Heart right ventricle (tissue), 16 donors: ENCODE measurements at regions of chr21 and their contacts with region 1.

Region 1: DNA sequence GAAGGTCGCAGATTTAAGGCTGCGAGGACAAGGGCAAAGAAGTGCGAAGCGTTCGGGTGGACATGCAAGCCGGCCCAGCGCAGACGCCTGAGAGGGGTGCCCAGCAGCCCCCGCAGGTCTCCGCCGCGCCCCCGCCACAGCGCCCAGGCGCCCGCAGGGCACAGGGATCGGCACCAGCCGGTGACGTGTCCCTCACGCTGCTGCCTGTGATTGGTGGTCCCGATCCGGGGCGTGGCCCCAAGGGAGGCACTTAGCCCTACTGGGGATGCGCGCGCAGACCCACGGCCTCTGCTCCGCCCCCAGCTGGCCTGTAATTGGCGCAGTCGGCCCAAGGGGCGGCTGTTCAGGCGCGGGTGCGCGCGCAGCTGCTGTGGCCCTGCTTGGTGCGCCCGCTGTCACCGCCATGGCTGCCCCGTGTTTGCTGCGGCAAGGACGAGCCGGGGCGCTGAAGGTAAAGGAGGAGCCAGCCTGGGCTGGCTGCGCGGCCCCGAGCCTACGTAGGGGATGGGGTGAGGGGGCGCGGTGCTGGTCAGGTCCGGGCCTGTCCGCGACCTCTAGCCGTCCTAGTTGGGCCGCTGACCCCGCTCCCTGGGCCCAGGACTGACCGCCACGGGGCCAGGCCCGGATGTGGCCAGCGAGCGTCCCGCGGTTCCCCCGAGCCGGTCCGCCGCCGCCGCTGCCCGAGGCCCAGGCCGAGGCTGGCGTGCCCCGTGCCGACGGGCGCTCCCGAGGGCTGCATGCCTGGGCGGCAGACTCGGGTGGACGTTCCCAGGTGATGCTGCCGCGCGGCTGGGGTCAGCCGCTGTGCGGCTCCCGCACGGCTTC is at the start of gene NDUFV3:
- DNase-seq: peak; percentile 99 to 100
- ATAC-seq: peak; percentile 97 to 100 (median 99)
- H3K4me3 ChIP-seq: peak within 1 kb of the TSS; percentile 58 to 99 (median 86)
- H3K27ac ChIP-seq: peak within 1 kb of the TSS; percentile 86 to 99 (median 96)
- H3K4me1 ChIP-seq: peaks cover 5 to 28% (median 20%) of the 10 kb centered on the region in 9 donors
- H3K27me3 ChIP-seq: no peaks in the 10 kb centered on the region
- CTCF ChIP-seq: no peak
- total RNA-seq, gene NDUFV3: 42.6 to 63.7 (median 52.2) TPM

Region 2: DNA sequence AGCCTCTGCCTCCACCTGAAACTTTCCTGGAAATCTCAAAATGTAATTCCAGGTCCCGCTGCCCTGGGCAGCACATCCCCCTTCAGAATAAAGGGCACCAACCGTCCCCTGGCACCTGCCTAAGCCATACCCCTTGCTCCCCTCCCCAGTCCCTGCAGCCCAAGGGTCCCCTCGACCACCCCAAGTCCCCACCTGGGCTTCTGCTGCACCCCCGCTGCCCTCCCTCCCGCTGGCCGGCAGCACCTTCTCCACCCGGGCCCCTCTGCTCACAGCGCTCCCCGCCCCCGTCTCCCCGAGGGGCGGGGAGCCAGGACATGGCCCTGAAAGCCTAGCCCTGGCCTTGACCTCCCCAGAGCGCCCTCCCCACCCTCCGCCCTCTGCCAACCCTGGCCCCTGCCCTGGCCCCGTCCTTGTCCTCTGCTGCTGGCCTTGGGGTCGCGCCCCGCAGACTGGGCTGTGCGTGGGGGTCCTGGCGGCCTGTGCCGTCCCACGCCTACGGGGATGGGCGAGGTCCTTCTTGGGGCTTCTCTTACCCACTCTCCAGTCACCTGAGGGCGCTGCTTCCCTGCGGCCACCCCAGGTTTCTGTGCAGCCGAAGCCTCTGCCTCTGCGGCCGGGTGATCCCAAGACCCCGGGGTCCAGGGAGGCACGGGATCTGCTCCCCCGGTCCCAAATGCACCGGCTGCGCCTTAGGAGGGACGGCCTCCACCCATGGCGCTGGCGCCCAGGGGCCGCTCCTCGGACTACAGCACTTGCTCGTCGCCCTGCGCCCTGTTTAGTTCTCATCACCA is 55.5 kb before region 1 on chr21:
- intact Hi-C with region 1: no loop called
- DNase-seq: no peak
- ATAC-seq: peak in 3 of 8 donors; percentile 5 to 13 (median 10)
- H3K4me3 ChIP-seq: no peak overlapping the region
- H3K27ac ChIP-seq: no peak overlapping the region
- H3K4me1 ChIP-seq: peaks cover 0 to 10% (median 0%) of the 10 kb centered on the region in 9 donors
- H3K27me3 ChIP-seq: peaks cover 0 to 8% (median 6%) of the 10 kb centered on the region in 7 donors
- CTCF ChIP-seq: no peak

Region 3: GRCh38 chr21:42878993-42879787 is 14.0 kb before region 1 on chr21 and contains the start of gene WDR4:
- intact Hi-C with region 1: loop called in 2 of 10 experiments (anchors 1 kb)
- DNase-seq: peak; percentile 97 to 98
- ATAC-seq: peak; percentile 99 to 100 (median 99)
- H3K4me3 ChIP-seq: peak within 1 kb of the TSS; percentile 80 to 100 (median 90)
- H3K27ac ChIP-seq: peak within 1 kb of the TSS; percentile 53 to 96 (median 89)
- H3K4me1 ChIP-seq: peaks cover 5 to 25% (median 19%) of the 10 kb centered on the region in 9 donors
- H3K27me3 ChIP-seq: no peaks in the 10 kb centered on the region
- CTCF ChIP-seq: no peak
- total RNA-seq, gene WDR4: 3.7 to 9.6 (median 4.5) TPM

Region 4: DNA sequence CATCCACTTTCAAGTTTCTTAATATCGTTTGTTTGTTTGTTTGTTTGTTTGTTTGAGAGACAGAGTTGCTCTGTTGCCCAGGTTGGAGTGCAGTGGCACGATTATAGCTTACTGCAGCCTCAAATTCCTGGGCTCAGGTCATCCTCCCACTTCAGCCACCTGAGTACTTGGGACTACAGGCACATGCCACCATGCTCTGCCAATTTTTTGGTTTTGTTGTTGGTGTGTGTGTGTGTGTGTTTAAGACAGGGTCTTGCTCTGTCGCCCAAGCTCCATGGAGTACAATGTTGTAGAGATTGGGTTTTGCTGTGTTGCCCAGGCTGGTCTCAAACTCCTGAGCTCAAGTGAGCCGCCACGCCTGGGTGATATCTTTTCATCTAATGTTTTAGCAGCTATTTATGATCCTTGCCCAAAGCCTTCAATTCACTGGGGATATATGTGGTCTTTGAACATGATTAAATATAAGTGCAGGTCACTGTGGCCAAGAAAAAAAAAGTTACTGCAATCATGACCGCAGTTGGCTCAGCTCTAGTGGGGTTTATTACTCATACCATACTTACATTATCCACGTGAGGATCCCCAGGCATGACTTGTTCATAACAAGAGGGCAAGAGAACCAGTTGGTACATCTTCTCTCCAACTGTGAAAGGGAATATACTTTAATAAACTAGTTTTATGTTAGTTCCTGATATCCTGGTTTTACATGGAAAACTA is 774.2 kb after region 1 on chr21:
- intact Hi-C with region 1: loop called in 1 of 10 experiments (anchors 10 kb)
- DNase-seq: no peak
- ATAC-seq: no peak
- H3K4me3 ChIP-seq: no peak overlapping the region
- H3K27ac ChIP-seq: no peak overlapping the region
- H3K4me1 ChIP-seq: peaks cover 0 to 15% (median 8%) of the 10 kb centered on the region in 9 donors
- H3K27me3 ChIP-seq: no peaks in the 10 kb centered on the region
- CTCF ChIP-seq: no peak